Dendritic cell treated with granulocyte-macrophage colony-stimulating factor and Interleukin-4, amounts not matched to agents 40 ng/mL and 50 ng/mL, for 4 days (primary cell): ENCODE measurements at regions of chrX and their contacts with region 1.

Region 1: DNA sequence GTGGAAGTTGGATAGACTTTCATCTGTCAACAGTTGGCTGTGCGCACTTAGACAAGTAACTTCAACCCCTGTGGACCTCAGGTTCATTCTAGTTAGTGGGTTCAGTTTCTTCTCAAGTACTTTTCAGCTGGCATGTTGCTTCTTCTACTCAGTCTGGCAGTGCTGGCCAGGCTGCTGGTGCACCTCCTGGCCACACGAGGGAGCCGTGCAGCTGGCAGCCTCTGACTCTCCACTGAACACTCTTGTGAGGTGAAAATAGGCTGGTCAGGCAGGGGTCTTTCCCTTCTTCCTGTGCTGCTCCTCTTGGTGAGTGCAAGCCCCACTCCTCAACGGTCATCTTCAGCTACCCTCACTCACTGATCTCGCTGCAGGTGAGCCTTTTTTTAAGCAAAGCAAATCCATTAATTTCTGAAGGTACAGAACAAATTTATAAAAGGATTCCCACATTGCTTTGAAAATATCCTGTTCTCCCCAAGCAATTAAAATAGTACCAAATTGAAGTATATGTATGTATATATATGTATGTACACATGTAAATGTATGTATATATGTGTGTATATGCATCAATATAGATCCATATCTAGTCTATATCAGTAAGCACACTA is 30.6 kb downstream of the LONRF3 start:
- H3K4me3 Mint-ChIP-seq: no peak overlapping the region
- H3K27ac Mint-ChIP-seq: no peak overlapping the region
- H3K4me1 Mint-ChIP-seq: no peaks in the 10 kb centered on the region
- H3K27me3 Mint-ChIP-seq: no peaks in the 10 kb centered on the region

Region 2: GRCh38 chrX:119015407-119016237 is 10.6 kb after region 1 on chrX:
- intact Hi-C with region 1: no loop called
- H3K4me3 Mint-ChIP-seq: no peak overlapping the region
- H3K27ac Mint-ChIP-seq: peak overlapping the region; percentile 83
- H3K4me1 Mint-ChIP-seq: peaks cover 20% of the 10 kb centered on the region
- H3K27me3 Mint-ChIP-seq: peaks cover 3% of the 10 kb centered on the region

Region 3: DNA sequence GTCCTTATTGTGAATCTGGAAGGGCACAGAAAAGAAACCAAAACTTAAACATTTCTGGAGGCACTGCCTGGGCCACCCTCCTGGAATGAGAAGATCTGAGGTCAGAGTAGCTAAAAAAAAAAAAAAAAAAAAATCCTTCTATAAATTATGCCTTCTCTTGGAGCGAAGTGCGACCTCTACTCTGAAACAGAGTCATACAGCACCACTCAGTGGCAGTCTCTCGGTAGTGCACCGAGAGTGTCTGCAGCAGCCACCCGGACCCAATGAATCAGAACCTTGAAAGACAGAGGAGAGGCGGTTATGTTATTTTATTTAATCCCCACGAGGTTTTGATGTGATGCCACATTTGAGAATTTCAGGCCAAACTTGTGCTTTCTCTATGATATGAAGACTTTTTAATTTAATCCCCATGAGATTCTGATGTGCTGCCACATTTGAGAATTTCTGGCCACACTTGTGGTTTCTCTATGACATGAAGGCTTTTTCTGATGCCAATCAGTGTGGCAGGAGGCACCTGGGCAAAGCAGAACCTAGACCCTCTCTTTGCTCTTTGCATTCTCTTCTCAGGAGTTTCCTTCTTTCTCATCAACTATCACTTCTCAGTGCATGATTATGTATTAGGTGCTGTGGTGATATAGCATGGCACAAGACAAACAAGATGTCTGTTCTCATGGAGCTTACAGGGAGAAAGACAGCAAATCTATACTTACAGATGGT is 62.2 kb after region 1 on chrX:
- intact Hi-C with region 1: loop called (anchors 1 kb)
- H3K4me3 Mint-ChIP-seq: no peak overlapping the region
- H3K27ac Mint-ChIP-seq: no peak overlapping the region
- H3K4me1 Mint-ChIP-seq: peaks cover 10% of the 10 kb centered on the region
- H3K27me3 Mint-ChIP-seq: peaks cover 3% of the 10 kb centered on the region